Aorta (tissue), 5 donors: ENCODE measurements at regions of chr15 and their contacts with region 1.

Region 1: GRCh38 chr15:95604634-95605036 is 725.9 kb upstream of the NR2F2 start:
- DNase-seq: no peak
- ATAC-seq: peak; percentile 77
- H3K4me3 ChIP-seq: no peak overlapping the region
- H3K27ac ChIP-seq: no peak overlapping the region
- H3K4me1 ChIP-seq: peaks cover 4% of the 10 kb centered on the region in 2 donors
- H3K27me3 ChIP-seq: no peaks in the 10 kb centered on the region

Region 2: GRCh38 chr15:95839367-95839782 is 234.7 kb after region 1 on chr15:
- intact Hi-C with region 1: loop called in 1 of 2 experiments (anchors 10 kb)
- DNase-seq: no peak
- ATAC-seq: no peak
- H3K4me3 ChIP-seq: no peak overlapping the region
- H3K27ac ChIP-seq: peak overlapping the region in 1 of 2 donors; percentile 76
- H3K4me1 ChIP-seq: no peaks in the 10 kb centered on the region
- H3K27me3 ChIP-seq: no peaks in the 10 kb centered on the region